Mammary epithelial cell (primary cell): ENCODE measurements at regions of chr6 and their contacts with region 1.

Region 1: GRCh38 chr6:11485271-11485670 is 52.3 kb upstream of the TMEM170B start:
- DNase-seq: no peak
- H3K4me3 ChIP-seq: no peak overlapping the region
- H3K27ac ChIP-seq: no peak overlapping the region
- H3K4me1 ChIP-seq: no peaks in the 10 kb centered on the region
- H3K27me3 ChIP-seq: no peaks in the 10 kb centered on the region
- CTCF ChIP-seq: no peak

Region 2: DNA sequence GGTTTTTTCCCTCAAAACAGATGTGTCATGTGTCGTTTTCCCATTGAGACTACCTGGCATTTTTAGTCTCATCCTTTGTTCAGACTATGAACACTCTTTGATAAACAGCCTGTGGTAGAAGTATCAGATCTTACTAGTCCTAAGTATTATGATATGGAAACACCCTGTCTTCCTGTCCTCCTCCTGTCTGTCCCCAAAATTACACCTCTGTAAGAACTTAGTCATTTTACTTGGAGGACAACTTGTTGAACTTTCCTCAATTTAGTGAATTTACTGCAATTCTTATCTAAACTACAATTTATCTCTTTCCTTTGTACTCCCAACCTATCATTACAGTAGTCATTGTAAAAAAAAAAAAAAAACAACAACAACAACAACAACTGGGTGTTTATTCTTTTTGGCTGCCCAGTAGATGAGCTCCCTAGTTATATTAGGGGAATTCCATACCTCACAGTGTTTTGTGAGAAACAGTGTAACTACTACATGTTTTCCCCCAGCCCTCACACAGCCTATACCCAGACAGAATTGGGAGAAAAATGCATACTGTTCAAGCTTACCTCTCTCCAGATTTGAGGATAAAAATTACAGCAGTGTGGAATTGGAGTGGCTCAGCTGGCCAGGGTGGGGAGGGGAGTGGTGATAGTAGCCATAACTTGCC is 355.2 kb before region 1 on chr6:
- CTCF ChIA-PET with region 1: no interaction called
- dilution Hi-C with region 1: loop called (anchors 5 kb)
- in situ Hi-C with region 1: no loop called
- intact Hi-C with region 1: no loop called
- DNase-seq: no peak
- H3K4me3 ChIP-seq: no peak overlapping the region
- H3K27ac ChIP-seq: no peak overlapping the region
- H3K4me1 ChIP-seq: no peaks in the 10 kb centered on the region
- H3K27me3 ChIP-seq: no peaks in the 10 kb centered on the region
- CTCF ChIP-seq: no peak

Region 3: DNA sequence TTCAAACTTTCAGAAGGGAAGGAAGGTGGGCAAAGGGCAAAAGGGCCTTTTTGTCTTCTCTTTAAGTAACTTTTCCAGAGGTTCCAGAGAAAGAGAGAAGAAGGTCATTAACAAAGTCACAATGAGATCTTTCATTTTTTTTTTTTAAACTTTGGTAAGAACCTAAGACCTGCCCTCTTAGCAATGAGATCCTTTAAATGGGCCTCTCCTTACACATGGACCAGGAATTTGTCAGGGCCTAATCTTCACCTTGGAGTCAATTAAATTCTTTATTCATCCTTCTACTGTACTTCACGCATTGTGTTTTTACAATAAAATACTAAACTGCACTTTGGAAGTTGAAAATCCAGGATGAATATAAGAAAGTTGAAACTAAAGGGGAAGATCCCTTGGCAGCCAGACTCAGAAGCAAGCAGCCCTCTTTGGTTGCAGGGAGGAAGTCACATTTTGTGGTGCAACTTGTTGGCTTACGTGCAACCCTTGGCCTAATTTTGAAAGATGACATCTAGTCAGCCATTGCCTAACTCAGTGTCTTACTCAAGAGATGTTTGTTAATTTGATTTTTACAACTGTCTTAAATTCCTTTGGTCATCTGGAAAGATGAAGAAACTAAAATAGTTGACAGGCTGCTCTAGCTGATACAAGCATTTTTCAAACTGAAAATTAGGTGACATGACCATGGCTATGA is 40.3 kb after region 1 on chr6:
- CTCF ChIA-PET with region 1: no interaction called
- dilution Hi-C with region 1: no loop called
- in situ Hi-C with region 1: no loop called
- intact Hi-C with region 1: no loop called
- DNase-seq: no peak
- H3K4me3 ChIP-seq: no peak overlapping the region
- H3K27ac ChIP-seq: no peak overlapping the region
- H3K4me1 ChIP-seq: no peaks in the 10 kb centered on the region
- H3K27me3 ChIP-seq: no peaks in the 10 kb centered on the region
- CTCF ChIP-seq: no peak